ENCODE measurements at regions of chr18 and their contacts with region 1.

Region 1: DNA sequence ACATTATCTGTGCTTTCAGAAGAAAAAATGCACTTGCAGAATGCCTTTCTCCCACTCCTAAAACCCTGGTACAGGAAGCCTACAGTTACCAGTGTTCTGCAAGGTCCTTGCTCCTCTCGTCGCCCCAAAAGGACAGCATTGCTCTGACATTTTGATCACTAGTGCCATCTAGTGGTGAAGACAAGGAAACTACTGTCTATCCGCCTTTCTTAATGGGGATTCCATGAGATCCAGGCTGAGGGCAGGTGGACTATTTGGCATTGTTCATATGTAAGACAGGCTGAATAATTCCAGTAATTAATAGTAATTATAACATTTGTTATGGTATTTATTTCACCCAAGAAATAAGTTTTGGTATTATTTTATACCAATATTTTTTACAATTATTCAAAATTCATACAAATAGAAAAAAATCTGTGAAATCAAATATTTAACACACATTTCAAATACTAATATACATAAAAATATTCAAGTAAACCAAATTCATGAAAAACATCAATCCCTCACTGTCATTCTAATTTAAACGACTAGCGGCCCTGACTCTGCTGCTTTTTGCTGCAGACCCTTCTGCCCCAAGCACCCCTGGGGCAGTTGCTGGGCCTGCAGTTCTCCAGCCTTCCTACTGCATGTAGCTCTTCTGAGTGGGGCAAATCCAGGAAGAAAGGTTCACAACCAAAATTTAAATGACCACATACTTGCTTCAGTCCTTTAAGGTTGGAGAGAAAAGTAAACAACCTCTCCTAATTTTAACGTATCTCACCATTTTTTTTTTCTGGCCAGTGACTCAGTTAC is 19.0 kb downstream of the TPGS2 start:
- DNase-seq: peak in 5 of 10 donors; percentile 8 to 45 (median 29)
- H3K4me3 ChIP-seq: no peak overlapping the region
- H3K27ac ChIP-seq: no peak overlapping the region
- H3K27me3 ChIP-seq: no peaks in the 10 kb centered on the region
- CTCF ChIP-seq: peak; percentile 58 to 93 (median 85)

Region 2: DNA sequence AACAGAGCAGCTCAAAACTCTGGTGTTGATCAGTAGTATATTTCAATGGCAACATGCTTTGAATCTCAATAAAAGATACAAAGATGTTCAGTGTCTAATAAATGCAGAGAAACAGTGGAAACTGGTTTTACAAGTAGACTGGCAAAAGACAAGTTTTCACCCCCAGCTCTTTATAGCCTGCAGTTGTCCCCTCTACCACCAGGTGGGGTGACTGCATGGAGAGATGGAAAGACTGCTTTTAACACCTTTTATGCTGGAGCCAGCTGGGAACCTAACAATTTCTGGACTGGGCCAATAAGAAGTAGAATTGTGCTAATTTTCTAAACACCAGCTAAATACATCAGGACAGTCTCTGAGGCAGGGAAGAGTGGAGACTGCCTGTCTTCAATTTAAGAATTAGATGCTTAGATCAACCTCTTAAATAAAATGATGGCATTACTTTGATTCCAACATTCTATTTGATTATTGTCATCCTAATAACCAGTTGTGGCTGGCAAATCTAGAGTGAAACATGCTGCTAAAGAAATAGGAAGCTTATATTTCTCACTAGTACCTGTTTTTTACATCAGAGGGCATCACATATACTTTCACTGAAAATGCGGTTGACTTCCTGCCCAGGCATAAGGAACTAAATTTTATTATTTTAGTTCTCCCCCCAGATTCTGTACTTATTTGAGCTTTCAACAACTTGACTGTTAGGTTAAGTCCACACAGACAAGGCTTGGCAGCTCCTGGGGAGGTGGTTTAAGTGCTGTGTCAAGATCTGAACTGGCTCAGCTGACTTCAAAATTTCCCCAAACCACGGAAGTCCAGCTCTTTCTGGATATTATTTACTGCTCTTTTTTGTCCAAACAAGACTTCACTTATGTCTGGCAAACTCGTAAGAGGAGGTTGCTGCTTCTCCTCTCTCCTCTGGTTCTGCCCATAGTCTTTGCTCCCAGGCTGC is 121.5 kb before region 1 on chr18:
- intact Hi-C with region 1: loop called in 1 of 2 experiments (anchors 5 kb)
- DNase-seq: peak in 8 of 10 donors; percentile 28 to 72 (median 57)
- H3K4me3 ChIP-seq: no peak overlapping the region
- H3K27ac ChIP-seq: no peak overlapping the region
- H3K27me3 ChIP-seq: no peaks in the 10 kb centered on the region
- CTCF ChIP-seq: peak; percentile 50 to 91 (median 86)

Measured in dorsolateral prefrontal cortex (tissue), 120 donors.